ENCODE measurements at regions of chr17 and their contacts with region 1.

Region 1: GRCh38 chr17:7515911-7516610 is 31.9 kb downstream of the POLR2A start:
- DNase-seq: no peak
- ATAC-seq: no peak
- H3K4me3 ChIP-seq: no peak overlapping the region
- H3K27ac ChIP-seq: no peak overlapping the region
- H3K4me1 ChIP-seq: 0 out of 2 replicates have a peak, but pooled peaks cover 1% of the 10 kb centered on the region
- H3K27me3 ChIP-seq: no peaks in the 10 kb centered on the region
- CTCF ChIP-seq: no peak
- POLR2A ChIP-seq: no peak
- RAD21 ChIP-seq: no peak

Region 2: GRCh38 chr17:7340179-7340578 is 175.9 kb before region 1 on chr17:
- CTCF ChIA-PET with region 1: no interaction called
- POLR2A ChIA-PET with region 1: no interaction called
- dilution Hi-C with region 1: no loop called
- in situ Hi-C with region 1: no loop called
- intact Hi-C with region 1: no loop called
- DNase-seq: peak; percentile 16
- ATAC-seq: no peak
- H3K4me3 ChIP-seq: no peak overlapping the region
- H3K27ac ChIP-seq: no peak overlapping the region
- H3K4me1 ChIP-seq: no peaks in the 10 kb centered on the region
- H3K27me3 ChIP-seq: peaks cover 25% of the 10 kb centered on the region
- CTCF ChIP-seq: no peak
- POLR2A ChIP-seq: no peak
- RAD21 ChIP-seq: no peak

Region 3: DNA sequence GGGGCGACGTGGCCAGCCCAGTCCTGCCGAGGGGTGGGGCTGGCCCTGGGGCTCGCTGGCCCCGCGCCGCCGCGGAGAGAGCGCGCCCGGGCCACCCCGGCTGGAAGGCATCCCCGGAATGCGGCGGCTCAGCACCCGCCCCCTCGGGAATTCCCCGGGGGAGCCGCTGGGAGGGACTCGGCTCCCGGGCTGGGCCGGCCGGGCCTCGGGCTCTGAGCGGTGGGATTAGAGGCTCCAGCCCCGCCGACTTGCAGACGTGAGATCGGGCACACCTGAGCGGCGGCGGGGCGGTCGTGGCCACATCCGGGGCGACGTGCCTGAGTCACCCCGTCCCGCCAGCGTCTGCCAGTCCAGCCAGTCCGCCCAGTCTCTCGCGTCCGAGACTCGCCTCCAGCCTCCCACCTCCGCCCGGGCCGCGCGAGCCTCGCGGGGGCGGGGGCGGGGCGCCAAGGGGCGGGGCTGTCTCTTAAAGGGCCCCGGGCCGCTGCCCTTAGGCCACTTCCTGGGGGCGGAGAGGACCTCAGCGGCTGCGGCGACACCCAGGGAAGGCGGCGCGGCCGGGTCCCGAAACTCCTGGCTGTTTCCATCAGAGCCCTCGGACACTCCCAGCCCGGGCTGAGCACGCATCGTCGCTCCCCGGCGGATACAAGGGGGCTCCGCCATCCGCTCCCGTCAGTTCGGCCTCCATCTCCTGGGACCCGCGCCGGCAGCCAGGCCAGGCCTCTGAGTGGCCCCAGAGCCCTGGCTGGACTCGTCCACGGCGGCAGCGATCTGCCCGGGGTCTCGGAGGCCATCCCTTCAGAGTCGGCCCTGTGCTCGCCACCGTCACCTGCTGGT is 164.2 kb before region 1 on chr17 and contains the start of gene KCTD11:
- CTCF ChIA-PET with region 1: no interaction called
- POLR2A ChIA-PET with region 1: no interaction called
- dilution Hi-C with region 1: no loop called
- in situ Hi-C with region 1: no loop called
- intact Hi-C with region 1: no loop called
- DNase-seq: peak; percentile 88
- ATAC-seq: peak; percentile 73
- H3K4me3 ChIP-seq: peak within 1 kb of the TSS; percentile 93
- H3K27ac ChIP-seq: peak within 1 kb of the TSS; percentile 99
- H3K4me1 ChIP-seq: peaks cover 39% of the 10 kb centered on the region
- H3K27me3 ChIP-seq: no peaks in the 10 kb centered on the region
- CTCF ChIP-seq: 0 out of 2 replicates have a peak, but pooled peaks have one; percentile 0
- POLR2A ChIP-seq: peak; percentile 66; the same call in 1 of the 2 replicates
- RAD21 ChIP-seq: no peak; the same call in 1 of the 2 replicates
- total RNA-seq, gene KCTD11: 10.6 and 10.8 TPM in 2 replicates

Region 4: DNA sequence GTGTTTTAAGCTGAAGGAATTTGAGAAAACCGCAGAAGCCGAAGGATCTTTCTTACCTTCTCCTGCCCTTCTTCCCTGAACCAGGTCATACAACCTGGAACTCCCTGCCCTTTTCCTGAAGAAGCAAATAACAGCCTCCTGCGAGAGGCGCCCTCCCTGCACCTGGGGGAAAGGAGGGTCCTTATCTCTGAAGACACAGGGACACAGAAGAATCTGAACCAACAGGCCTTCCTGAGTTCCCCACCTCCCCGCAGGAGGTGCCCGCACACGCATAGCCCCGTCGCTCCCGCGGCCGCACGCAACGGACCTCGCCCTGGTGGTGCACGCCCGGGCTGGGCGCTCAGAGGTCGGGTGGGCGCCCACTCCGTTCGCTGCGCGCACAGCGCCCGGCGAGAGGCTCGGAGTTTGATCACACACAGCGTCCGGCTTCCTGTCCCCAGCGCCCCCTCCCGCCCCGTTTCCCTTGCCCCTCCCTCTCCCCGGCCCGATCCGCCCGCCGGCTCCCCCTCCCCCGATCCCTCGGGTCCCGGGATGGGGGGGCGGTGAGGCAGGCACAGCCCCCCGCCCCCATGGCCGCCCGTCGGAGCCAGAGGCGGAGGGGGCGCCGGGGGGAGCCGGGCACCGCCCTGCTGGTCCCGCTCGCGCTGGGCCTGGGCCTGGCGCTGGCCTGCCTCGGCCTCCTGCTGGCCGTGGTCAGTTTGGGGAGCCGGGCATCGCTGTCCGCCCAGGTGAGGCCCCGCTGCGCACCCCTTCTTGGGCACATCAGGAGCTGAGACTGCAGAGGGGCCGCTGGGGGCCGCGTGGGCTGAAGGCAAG is 32.7 kb after region 1 on chr17 and contains the start of gene TNFSF12:
- CTCF ChIA-PET with region 1: interaction called, 3 read pairs
- POLR2A ChIA-PET with region 1: no interaction called
- dilution Hi-C with region 1: no loop called
- in situ Hi-C with region 1: loop called (anchors 5 kb)
- intact Hi-C with region 1: no loop called
- DNase-seq: peak; percentile 7
- ATAC-seq: peak; percentile 90
- H3K4me3 ChIP-seq: peak within 1 kb of the TSS; percentile 67
- H3K27ac ChIP-seq: peak within 1 kb of the TSS; percentile 38
- H3K4me1 ChIP-seq: peaks cover 8% of the 10 kb centered on the region
- H3K27me3 ChIP-seq: no peaks in the 10 kb centered on the region
- CTCF ChIP-seq: peak; percentile 15; the same call in 1 of the 2 replicates
- POLR2A ChIP-seq: no peak
- RAD21 ChIP-seq: no peak; the same call in 1 of the 2 replicates
- total RNA-seq, gene TNFSF12: 2.7 and 3.6 TPM in 2 replicates

Region 5: DNA sequence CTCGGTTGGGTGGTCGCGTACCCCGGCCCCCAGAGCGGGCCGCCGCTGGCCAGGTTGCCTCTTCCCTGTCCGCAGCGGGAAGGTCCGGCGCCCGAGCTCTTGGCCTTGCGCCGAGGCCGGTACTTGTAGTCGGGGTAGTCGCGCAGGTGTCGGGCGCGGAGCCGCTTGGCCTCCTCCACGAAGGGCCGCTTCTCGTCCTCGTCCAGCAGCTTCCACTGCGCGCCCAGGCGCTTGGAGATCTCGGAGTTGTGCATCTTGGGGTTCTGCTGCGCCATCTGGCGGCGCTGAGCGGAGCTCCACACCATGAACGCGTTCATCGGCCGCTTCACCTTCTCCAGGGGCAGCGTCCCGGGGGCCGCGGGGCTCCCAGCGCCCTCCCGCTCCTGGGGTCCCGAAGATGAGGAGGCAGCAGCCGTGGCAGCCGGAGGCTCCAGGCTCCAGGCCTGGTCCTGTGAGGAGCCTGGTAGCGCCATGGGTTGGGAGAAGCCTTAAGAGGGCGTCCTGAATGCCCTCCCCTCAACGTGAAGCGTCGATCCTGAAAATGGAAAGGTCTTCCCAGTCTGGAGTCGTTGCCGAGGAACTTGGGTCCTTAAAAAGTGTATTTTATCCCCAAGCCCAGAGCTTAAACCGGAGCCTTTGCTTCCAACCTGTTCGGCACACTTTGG is 73.3 kb after region 1 on chr17:
- CTCF ChIA-PET with region 1: no interaction called
- POLR2A ChIA-PET with region 1: no interaction called
- dilution Hi-C with region 1: no loop called
- in situ Hi-C with region 1: no loop called
- intact Hi-C with region 1: loop called (anchors 1 kb)
- DNase-seq: peak; percentile 83
- ATAC-seq: peak; percentile 64
- H3K4me3 ChIP-seq: no peak overlapping the region
- H3K27ac ChIP-seq: no peak overlapping the region; the same call in 1 of the 2 replicates
- H3K4me1 ChIP-seq: peaks cover 32% of the 10 kb centered on the region
- H3K27me3 ChIP-seq: no peaks in the 10 kb centered on the region
- CTCF ChIP-seq: peak; percentile 79
- POLR2A ChIP-seq: peak; percentile 41; the same call in 1 of the 2 replicates
- RAD21 ChIP-seq: peak; percentile 78